ENCODE measurements at regions of chr9 and their contacts with region 1.

Region 1: GRCh38 chr9:33167046-33167808 is at the start of gene B4GALT1:
- DNase-seq: peak; percentile 96
- ATAC-seq: peak; percentile 79
- H3K4me3 Mint-ChIP-seq: peak within 1 kb of the TSS; percentile 94
- H3K27ac Mint-ChIP-seq: peak within 1 kb of the TSS; percentile 97
- H3K4me1 Mint-ChIP-seq: peaks cover 46% of the 10 kb centered on the region
- H3K27me3 Mint-ChIP-seq: no peaks in the 10 kb centered on the region
- CTCF ChIP-seq: no peak
- total RNA-seq, gene B4GALT1: 41.2 to 41.4 TPM

Region 2: DNA sequence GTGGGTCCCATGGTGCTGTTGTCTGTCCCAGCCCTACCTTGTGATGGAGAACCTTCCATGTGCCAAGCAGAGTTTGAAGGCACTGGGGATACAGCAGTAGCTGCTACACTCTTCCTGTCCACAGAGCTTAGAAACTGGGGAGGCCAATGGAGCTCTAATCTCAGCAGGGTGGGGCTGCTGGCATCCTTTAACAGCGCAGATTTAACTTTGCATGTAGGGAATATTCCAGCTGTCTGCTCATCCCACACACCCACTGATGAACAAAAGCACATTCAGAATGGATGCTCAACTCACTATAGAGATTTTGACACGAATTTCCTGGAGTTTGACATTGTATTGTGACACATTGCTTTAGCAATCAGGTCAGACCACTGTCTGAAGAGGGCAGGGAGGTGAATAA is 334.9 kb before region 1 on chr9:
- CTCF ChIA-PET with region 1: no interaction called
- POLR2A ChIA-PET with region 1: no interaction called
- intact Hi-C with region 1: no loop called
- DNase-seq: no peak
- ATAC-seq: no peak
- H3K4me3 Mint-ChIP-seq: no peak overlapping the region
- H3K27ac Mint-ChIP-seq: no peak overlapping the region
- H3K4me1 Mint-ChIP-seq: no peaks in the 10 kb centered on the region
- H3K27me3 Mint-ChIP-seq: peaks cover 6% of the 10 kb centered on the region
- CTCF ChIP-seq: no peak

Region 3: DNA sequence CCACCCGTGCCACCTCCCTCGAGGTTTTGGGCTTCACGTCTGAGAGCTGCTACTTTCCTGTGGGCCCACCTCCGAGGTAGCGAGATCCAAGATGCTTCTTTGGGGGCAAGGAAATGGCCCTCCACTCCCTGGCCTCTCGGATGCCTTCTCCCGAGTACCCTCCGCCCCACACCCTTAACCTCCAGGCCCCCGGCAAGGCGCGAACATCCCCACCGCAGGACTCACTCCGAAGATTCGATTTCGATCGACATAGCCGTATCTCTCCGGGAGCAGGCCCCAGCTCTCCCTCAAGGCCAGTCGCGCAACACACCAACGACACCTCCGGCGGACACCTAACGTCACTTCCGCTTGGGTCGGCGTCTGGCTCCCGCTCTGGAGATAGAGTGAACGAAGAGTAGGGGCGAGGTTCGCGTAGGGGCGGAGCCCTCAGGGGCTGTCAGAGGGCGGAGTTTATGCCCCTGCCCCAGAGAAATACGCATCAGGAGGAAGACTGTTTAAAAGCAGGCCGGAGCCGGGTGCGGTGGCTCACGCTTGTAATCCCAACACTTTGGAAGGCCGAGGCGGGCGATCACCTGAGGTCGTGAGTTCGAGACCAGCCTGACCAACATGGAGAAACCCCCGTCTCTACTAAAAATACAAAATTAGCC is 90.7 kb before region 1 on chr9 and contains the start of gene SMU1:
- CTCF ChIA-PET with region 1: interaction called, 9 read pairs
- POLR2A ChIA-PET with region 1: interaction called, 5 read pairs
- intact Hi-C with region 1: loop called (anchors 1 kb)
- DNase-seq: peak; percentile 98
- ATAC-seq: peak; percentile 97
- H3K4me3 Mint-ChIP-seq: peak within 1 kb of the TSS; percentile 94
- H3K27ac Mint-ChIP-seq: peak within 1 kb of the TSS; percentile 99
- H3K4me1 Mint-ChIP-seq: peaks cover 48% of the 10 kb centered on the region
- H3K27me3 Mint-ChIP-seq: no peaks in the 10 kb centered on the region
- CTCF ChIP-seq: no peak
- total RNA-seq, gene SMU1: 23.8 to 23.9 TPM

Region 4: GRCh38 chr9:33116860-33117259 is 50.4 kb before region 1 on chr9:
- CTCF ChIA-PET with region 1: no interaction called
- POLR2A ChIA-PET with region 1: no interaction called
- intact Hi-C with region 1: loop called (anchors 10 kb)
- DNase-seq: no peak
- ATAC-seq: peak; percentile 17
- H3K4me3 Mint-ChIP-seq: no peak overlapping the region
- H3K27ac Mint-ChIP-seq: peak overlapping the region; percentile 67
- H3K4me1 Mint-ChIP-seq: peaks cover 21% of the 10 kb centered on the region
- H3K27me3 Mint-ChIP-seq: no peaks in the 10 kb centered on the region
- CTCF ChIP-seq: no peak

Region 5: GRCh38 chr9:33130508-33130911 is 36.7 kb before region 1 on chr9:
- CTCF ChIA-PET with region 1: interaction called, 4 read pairs
- POLR2A ChIA-PET with region 1: interaction called, 4 read pairs
- intact Hi-C with region 1: loop called (anchors 5 kb)
- DNase-seq: peak; percentile 46
- ATAC-seq: peak; percentile 98
- H3K4me3 Mint-ChIP-seq: no peak overlapping the region
- H3K27ac Mint-ChIP-seq: peak overlapping the region; percentile 92
- H3K4me1 Mint-ChIP-seq: peaks cover 38% of the 10 kb centered on the region
- H3K27me3 Mint-ChIP-seq: no peaks in the 10 kb centered on the region
- CTCF ChIP-seq: no peak